Heart left ventricle (tissue), 16 donors: ENCODE measurements at regions of chr2 and their contacts with region 1.

Region 1: GRCh38 chr2:219444566-219445091 is 10.0 kb downstream of the SPEG start:
- DNase-seq: peak in 2 of 5 donors; percentile 38 to 61
- ATAC-seq: no peak
- H3K4me3 ChIP-seq: no peak overlapping the region
- H3K27ac ChIP-seq: peak overlapping the region in 9 of 12 donors; percentile 3 to 96 (median 42)
- H3K4me1 ChIP-seq: peaks cover 0 to 81% (median 17%) of the 10 kb centered on the region in 12 donors
- H3K27me3 ChIP-seq: peaks cover 0 to 51% (median 8%) of the 10 kb centered on the region in 9 donors
- CTCF ChIP-seq: no peak
- POLR2A ChIP-seq: no peak

Region 2: GRCh38 chr2:219470429-219470828 is 25.8 kb after region 1 on chr2:
- intact Hi-C with region 1: loop called in 1 of 10 experiments (anchors 2 kb)
- DNase-seq: no peak
- ATAC-seq: peak in 3 of 4 donors; percentile 20 to 51 (median 37)
- H3K4me3 ChIP-seq: no peak overlapping the region
- H3K27ac ChIP-seq: peak overlapping the region in 10 of 12 donors; percentile 17 to 82 (median 59)
- H3K4me1 ChIP-seq: peaks cover 0 to 65% (median 9%) of the 10 kb centered on the region in 12 donors
- H3K27me3 ChIP-seq: no peaks in the 10 kb centered on the region
- CTCF ChIP-seq: no peak
- POLR2A ChIP-seq: no peak

Region 3: GRCh38 chr2:219836647-219837177 is 392.1 kb after region 1 on chr2:
- intact Hi-C with region 1: no loop called
- DNase-seq: no peak
- ATAC-seq: no peak
- H3K4me3 ChIP-seq: no peak overlapping the region
- H3K27ac ChIP-seq: no peak overlapping the region
- H3K4me1 ChIP-seq: no peaks in the 10 kb centered on the region
- H3K27me3 ChIP-seq: no peaks in the 10 kb centered on the region
- CTCF ChIP-seq: peak in 11 of 12 donors; percentile 27 to 59 (median 45)
- POLR2A ChIP-seq: no peak